ENCODE measurements at regions of chr18 and their contacts with region 1.

Region 1: DNA sequence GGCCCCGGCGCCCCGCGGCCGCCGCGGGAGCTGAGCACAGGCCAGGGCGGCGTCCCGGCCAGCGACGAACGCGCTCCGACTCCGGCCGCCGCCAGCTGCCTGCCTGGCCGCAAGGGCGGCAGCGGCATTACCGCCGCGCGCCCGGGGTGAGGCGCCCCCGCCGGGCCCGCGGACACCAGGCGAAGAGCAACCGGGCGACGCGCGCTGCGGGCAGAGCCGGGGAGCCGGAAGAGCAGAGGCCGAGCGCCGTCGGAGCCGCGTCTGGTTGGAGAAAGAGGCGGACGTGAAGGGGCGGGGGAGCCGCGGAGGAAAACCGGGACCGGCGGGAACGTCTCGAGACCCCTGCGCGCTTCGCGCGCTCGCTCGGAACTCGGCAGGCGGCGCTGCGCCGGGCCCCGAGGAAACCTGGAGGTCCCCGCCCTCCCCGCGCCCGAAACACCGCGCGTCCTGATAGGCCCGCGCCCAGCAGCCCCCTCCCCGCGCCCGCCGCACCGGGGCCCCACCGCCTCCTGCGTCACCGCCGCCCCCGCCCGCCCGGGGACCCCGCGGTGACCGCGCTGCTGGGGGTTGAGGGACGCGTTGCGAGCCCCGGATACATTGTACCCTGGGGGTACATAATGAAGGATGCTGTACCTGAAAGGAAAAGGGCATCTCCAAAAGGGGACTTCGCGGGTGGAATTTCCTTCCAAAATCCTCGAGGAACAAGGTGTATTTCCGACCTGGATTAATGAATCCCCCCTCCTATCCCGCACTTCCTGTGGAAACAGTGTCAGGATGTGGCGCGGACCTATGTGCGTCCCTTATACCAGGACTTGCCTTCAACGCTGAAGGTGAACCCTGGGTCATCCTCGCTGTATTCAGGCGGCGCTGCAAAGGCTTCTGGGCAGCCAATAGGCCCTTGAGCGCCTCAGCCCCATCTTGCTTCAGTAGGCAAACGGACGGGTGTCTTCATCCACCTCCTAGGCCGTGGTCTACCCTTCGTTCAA is 1.0 kb upstream of the B4GALT6 start:
- DNase-seq: peak; percentile 83
- H3K4me3 ChIP-seq: peak overlapping the region; percentile 52 to 68 (median 59)
- H3K27ac ChIP-seq: peak overlapping the region; percentile 39
- H3K4me1 ChIP-seq: peaks cover 31% of the 10 kb centered on the region
- H3K27me3 ChIP-seq: no peaks in the 10 kb centered on the region
- CTCF ChIP-seq: peak; percentile 35 to 50
- POLR2A ChIP-seq: peak; percentile 48

Region 2: GRCh38 chr18:31610286-31611205 is 74.8 kb before region 1 on chr18:
- CTCF ChIA-PET with region 1: interaction called, 14 read pairs
- POLR2A ChIA-PET with region 1: no interaction called
- dilution Hi-C with region 1: no loop called
- intact Hi-C with region 1: loop called (anchors 5 kb)
- DNase-seq: peak; percentile 26
- H3K4me3 ChIP-seq: no peak overlapping the region
- H3K27ac ChIP-seq: no peak overlapping the region
- H3K4me1 ChIP-seq: no peaks in the 10 kb centered on the region
- H3K27me3 ChIP-seq: peaks cover 7 to 9% of the 10 kb centered on the region in 2 experiments
- CTCF ChIP-seq: peak; percentile 5 to 30
- POLR2A ChIP-seq: no peak

Region 3: DNA sequence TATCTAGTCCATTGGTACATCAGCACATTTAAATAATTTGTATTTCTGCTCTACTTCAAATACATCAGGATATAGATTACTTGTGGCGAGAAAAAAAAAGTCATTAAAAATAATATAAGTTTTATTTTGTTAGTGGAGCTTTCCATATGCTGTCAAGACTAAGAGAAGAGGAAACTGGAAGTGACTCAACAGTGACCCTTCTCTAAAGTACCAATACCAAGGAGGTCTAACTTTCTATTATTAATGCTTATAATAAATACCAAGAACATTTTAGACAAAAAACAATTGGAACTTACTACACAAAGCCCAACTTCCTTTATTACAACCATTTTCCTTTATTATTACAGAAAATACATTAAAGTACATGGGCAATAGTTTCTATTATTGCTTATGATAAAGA is 53.9 kb before region 1 on chr18:
- CTCF ChIA-PET with region 1: no interaction called
- POLR2A ChIA-PET with region 1: no interaction called
- dilution Hi-C with region 1: no loop called
- intact Hi-C with region 1: loop called (anchors 2 kb)
- DNase-seq: peak; percentile 67
- H3K4me3 ChIP-seq: no peak overlapping the region
- H3K27ac ChIP-seq: no peak overlapping the region
- H3K4me1 ChIP-seq: peaks cover 15% of the 10 kb centered on the region
- H3K27me3 ChIP-seq: no peaks in the 10 kb centered on the region
- CTCF ChIP-seq: no peak
- POLR2A ChIP-seq: no peak

Region 4: GRCh38 chr18:32092422-32093101 is 407.2 kb after region 1 on chr18:
- CTCF ChIA-PET with region 1: no interaction called
- POLR2A ChIA-PET with region 1: no interaction called
- dilution Hi-C with region 1: no loop called
- intact Hi-C with region 1: loop called (anchors 5 kb)
- DNase-seq: peak; percentile 98
- H3K4me3 ChIP-seq: peak overlapping the region; percentile 30 to 88 (median 81)
- H3K27ac ChIP-seq: peak overlapping the region; percentile 95
- H3K4me1 ChIP-seq: peaks cover 12% of the 10 kb centered on the region
- H3K27me3 ChIP-seq: no peaks in the 10 kb centered on the region
- CTCF ChIP-seq: no peak
- POLR2A ChIP-seq: peak; percentile 73